ENCODE measurements at regions of chr7 and their contacts with region 1.

Region 1: GRCh38 chr7:26365077-26365900 is 73.6 kb downstream of the SNX10 start:
- DNase-seq: peak; percentile 14
- H3K4me3 ChIP-seq: no peak overlapping the region
- CTCF ChIP-seq: peak; percentile 49

Region 2: DNA sequence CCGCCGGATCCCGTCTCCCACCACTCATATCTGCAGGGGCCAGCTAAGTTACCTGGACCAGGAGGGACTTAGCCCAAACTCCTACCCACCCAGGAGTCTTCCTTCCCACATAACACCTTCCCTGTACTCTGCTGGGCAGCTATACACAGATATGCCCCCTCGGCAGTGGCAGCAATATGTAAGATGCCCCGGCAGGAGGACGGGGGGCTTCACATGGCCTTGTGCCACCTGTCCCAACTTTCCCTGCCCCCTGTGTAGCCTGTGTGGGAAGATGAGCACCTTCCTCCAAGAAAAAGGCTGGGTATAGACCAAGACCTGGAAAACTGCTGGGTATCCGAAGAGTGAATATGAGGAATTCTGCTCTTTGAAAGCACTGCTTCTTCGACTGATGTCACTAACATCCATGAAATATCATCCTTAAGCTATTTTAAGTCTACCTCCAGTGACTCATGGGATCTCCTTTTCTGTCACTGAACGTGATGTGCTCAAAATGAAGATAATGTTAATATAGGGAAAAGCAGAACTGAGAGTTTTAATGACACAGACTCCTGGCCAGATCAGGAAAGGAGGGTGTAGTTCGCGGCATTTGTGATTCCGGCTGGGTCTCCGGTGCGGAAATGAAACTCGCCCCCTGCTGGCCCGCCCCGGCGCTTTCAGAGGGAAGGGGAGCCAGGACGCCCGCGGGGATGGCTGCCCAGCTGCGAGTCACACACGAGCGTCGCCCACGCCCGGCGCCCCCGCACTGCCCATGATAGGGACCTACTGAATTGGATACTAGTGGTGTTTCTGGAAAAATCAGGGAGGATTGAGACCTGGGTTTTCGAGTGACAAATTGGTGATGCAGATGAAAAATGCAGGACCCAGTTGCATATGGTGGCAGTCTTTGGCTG is 470.1 kb before region 1 on chr7:
- CTCF ChIA-PET with region 1: interaction called, 329 read pairs
- POLR2A ChIA-PET with region 1: no interaction called
- DNase-seq: no peak
- H3K4me3 ChIP-seq: peak overlapping the region; percentile 13; the same call in 1 of the 2 replicates
- CTCF ChIP-seq: peak; percentile 74

Region 3: GRCh38 chr7:26348234-26348851 is 16.9 kb before region 1 on chr7:
- CTCF ChIA-PET with region 1: interaction called, 13 read pairs
- POLR2A ChIA-PET with region 1: no interaction called
- DNase-seq: no peak
- H3K4me3 ChIP-seq: no peak overlapping the region
- CTCF ChIP-seq: no peak

Region 4: DNA sequence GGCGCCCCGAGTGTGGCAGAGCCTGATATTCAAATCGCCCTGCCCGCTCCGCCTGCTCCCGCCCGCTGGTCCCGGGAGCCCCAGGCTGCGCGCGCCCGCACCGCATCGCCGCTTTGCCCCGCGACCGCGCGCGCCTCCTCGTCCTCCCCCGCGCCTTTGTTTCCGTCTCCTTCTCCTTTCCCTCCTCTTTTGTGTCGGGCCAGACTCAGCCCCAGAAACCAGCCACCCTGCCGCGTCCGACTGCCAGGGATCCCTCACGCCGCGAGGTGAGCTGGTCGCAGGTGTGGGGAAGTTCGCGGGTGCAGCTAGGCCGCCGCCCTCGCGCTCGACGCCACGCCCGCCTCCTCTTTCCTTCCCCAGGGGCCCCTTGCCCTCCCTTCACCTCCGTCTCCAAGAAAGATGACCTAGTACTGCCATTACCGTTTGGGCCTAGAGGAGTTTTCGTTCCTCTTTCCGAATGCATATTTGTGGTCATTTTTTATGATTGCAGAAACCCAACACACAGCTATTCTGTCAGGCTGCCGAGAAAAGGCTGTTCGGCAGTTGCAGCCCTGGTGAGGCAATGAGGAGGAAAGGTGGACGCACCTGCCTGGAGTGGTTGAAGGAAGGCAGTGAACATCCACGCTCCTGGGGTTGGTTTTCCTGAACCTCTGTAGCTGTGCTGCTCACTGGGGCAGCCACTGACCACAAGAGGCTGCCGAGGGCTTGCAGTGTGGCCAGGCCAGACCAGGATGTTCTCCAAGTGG is 33.6 kb after region 1 on chr7:
- CTCF ChIA-PET with region 1: interaction called, 12 read pairs
- POLR2A ChIA-PET with region 1: no interaction called
- DNase-seq: no peak
- H3K4me3 ChIP-seq: peak overlapping the region; percentile 53
- CTCF ChIP-seq: no peak

Region 5: GRCh38 chr7:26603631-26604030 is 238.3 kb after region 1 on chr7:
- CTCF ChIA-PET with region 1: no interaction called
- POLR2A ChIA-PET with region 1: no interaction called
- DNase-seq: no peak
- H3K4me3 ChIP-seq: no peak overlapping the region
- CTCF ChIP-seq: no peak

Region 6: GRCh38 chr7:26675143-26675887 is 310.0 kb after region 1 on chr7:
- CTCF ChIA-PET with region 1: interaction called, 179 read pairs
- POLR2A ChIA-PET with region 1: no interaction called
- DNase-seq: no peak
- H3K4me3 ChIP-seq: no peak overlapping the region
- CTCF ChIP-seq: no peak

Measured in AG04449 (cell line).